Activated CD8-positive, alpha-beta T cell treated with anti-CD3 and anti-CD28 coated beads for 36 hours (primary cell): ENCODE measurements at regions of chr21 and their contacts with region 1.

Region 1: DNA sequence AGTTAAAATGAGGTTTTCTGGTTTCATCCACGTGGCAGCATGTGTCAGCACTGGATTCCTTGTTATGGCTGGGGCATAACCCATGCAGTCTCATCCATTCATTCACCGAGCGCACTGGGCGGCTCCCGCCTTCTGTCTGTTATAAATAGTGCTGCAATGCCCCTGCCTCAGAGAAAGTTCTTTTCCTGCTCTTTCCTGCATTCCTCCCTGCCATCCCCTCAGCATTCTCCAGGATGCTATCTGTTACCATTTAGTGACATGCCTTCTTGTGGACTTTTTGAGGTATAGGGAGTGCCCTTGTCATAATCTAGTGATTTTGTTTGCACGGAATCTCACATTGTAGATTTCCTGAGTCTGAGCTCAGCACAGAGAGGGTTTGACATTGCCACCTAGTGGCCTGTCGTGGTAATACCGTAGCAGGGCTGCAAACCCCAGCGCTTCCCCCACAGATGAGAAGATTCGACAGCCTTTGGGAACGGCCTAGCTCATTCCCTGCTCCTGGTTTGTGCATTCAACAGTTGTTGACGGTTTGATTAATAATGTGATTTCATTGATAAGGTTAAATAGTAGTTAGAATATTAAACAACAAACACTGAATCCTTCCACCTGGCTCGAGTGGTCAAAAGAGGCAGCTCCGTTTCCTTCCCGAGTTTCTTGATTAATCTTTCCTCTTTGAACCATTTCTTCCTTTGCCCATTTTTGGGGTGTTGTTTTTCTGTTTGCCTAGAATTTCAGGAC is 46.3 kb downstream of the UMODL1 start:
- DNase-seq: peak; percentile 86
- ATAC-seq: peak; percentile 91
- H3K4me3 Mint-ChIP-seq: peak overlapping the region; percentile 40
- H3K27ac Mint-ChIP-seq: peak overlapping the region; percentile 30
- H3K4me1 Mint-ChIP-seq: peaks cover 25% of the 10 kb centered on the region
- H3K27me3 Mint-ChIP-seq: peaks cover 53% of the 10 kb centered on the region
- CTCF ChIP-seq: peak; percentile 97

Region 2: GRCh38 chr21:41816220-41817165 is 300.9 kb before region 1 on chr21:
- CTCF ChIA-PET with region 1: interaction called, 35 read pairs
- POLR2A ChIA-PET with region 1: interaction called, 3 read pairs
- intact Hi-C with region 1: loop called (anchors 1 kb)
- DNase-seq: peak; percentile 67
- ATAC-seq: peak; percentile 90
- H3K4me3 Mint-ChIP-seq: no peak overlapping the region
- H3K27ac Mint-ChIP-seq: no peak overlapping the region
- H3K4me1 Mint-ChIP-seq: peaks cover 6% of the 10 kb centered on the region
- H3K27me3 Mint-ChIP-seq: no peaks in the 10 kb centered on the region
- CTCF ChIP-seq: peak; percentile 67

Region 3: GRCh38 chr21:42009831-42010523 is 107.4 kb before region 1 on chr21 and contains the start of gene ZBTB21:
- CTCF ChIA-PET with region 1: interaction called, 17 read pairs
- POLR2A ChIA-PET with region 1: interaction called, 3 read pairs
- intact Hi-C with region 1: no loop called
- DNase-seq: peak; percentile 98
- ATAC-seq: peak; percentile 90
- H3K4me3 Mint-ChIP-seq: peak within 1 kb of the TSS; percentile 93
- H3K27ac Mint-ChIP-seq: peak within 1 kb of the TSS; percentile 99
- H3K4me1 Mint-ChIP-seq: peaks cover 28% of the 10 kb centered on the region
- H3K27me3 Mint-ChIP-seq: no peaks in the 10 kb centered on the region
- CTCF ChIP-seq: no peak
- total RNA-seq, gene ZBTB21: 29.6 to 29.7 TPM

Region 4: GRCh38 chr21:42129300-42130266 is 12.2 kb after region 1 on chr21:
- CTCF ChIA-PET with region 1: interaction called, 13 read pairs
- POLR2A ChIA-PET with region 1: interaction called, 3 read pairs
- intact Hi-C with region 1: no loop called
- DNase-seq: peak; percentile 35
- ATAC-seq: peak; percentile 68
- H3K4me3 Mint-ChIP-seq: no peak overlapping the region
- H3K27ac Mint-ChIP-seq: peak overlapping the region; percentile 55
- H3K4me1 Mint-ChIP-seq: peaks cover 12% of the 10 kb centered on the region
- H3K27me3 Mint-ChIP-seq: peaks cover 14% of the 10 kb centered on the region
- CTCF ChIP-seq: no peak